RWPE1 (cell line): ENCODE measurements at regions of chr2 and their contacts with region 1.

Region 1: DNA sequence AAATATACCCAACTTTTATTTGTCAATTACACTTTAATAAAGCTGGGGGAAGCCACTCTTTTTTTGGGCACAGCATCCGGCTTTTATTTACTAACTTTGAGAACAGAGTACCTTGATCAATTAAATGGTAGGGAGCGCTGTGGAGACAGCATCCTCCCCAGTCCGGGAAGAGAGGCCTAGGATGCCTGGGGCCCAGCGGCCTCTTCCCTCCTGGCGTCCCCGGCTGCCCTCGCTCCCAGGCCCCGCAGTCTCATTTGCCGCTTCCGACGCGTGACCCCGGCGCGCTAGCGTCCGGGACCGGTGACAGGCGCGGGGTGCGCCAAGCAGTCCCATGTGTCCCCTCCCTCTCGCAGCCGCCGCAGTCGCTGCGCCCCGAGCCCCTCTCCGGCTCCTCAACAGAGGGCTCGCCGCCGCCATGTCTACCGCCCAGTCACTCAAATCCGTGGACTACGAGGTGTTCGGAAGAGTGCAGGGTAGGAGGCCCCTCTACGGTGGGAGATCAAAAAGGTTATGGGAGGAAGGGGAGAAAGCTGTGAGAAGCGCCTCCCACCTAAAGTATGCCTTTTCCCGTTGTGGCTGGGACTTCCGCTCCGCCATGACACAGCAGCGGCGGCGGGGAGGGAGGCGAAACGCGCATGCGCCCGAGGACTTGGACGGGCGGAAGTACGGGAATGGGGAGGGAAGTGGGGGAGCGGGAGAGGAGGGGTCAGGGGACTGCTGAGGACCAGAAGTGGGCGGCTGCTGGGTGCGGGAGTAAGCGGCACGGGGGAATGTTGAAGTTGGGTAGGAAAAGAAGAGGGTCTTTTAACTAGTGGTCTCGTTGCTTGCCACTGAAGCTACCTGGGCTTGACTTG is at the start of gene ACYP2:
- DNase-seq: peak; percentile 95
- H3K27ac ChIP-seq: peak within 1 kb of the TSS; percentile 95
- CTCF ChIP-seq: no peak; the same call in 1 of the 2 replicates

Region 2: GRCh38 chr2:53786705-53787612 is 328.6 kb before region 1 on chr2 and contains the starts of genes ASB3 and ERLEC1:
- CTCF ChIA-PET with region 1: interaction called, 11 read pairs
- POLR2A ChIA-PET with region 1: no interaction called
- DNase-seq: peak; percentile 58
- H3K27ac ChIP-seq: peak within 1 kb of the TSS; percentile 89
- CTCF ChIP-seq: no peak

Region 3: DNA sequence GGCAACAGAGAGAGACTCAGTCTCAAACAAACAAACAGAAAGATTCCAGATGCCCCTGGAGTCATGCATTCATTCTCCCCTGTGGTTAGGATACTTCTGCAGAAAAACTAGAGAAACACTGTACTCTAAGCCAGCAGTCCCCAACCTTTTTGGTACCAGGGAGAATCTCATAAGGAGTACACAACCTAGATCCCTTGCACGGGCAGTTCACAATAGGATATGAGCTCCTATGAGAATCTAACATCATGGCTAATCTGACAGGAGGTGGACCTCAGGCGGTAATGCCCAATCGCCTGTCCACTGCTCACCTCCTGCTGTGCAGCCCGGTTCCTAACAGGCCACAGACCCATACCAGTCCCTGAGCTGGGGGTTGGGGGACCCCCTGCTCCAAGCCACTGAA is 163.0 kb before region 1 on chr2:
- CTCF ChIA-PET with region 1: no interaction called
- POLR2A ChIA-PET with region 1: no interaction called
- DNase-seq: no peak
- H3K27ac ChIP-seq: no peak overlapping the region
- CTCF ChIP-seq: no peak

Region 4: DNA sequence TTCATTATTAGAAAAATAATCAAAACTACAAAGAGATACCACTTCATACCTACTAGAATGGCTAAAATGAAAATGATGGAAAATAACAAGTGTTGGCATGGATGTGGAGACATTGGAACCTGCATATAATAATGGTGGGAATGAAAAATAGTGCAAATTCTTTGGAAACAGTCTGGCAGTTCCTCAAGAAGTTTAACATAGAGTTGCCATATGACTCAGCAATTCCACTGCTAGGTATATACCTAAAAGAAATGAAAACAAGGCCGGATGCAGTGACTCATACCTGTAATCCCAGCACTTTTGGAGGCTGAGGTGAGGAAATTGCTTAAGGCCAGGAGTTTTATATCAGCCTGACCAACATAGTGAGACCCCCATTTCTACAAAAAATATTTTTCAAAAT is 41.7 kb before region 1 on chr2:
- CTCF ChIA-PET with region 1: no interaction called
- POLR2A ChIA-PET with region 1: no interaction called
- DNase-seq: no peak
- H3K27ac ChIP-seq: no peak overlapping the region
- CTCF ChIP-seq: no peak